ENCODE measurements at regions of chr18 and their contacts with region 1.

Region 1: GRCh38 chr18:32362485-32362884 is 108.2 kb downstream of the GAREM1 start:
- DNase-seq: no peak
- ATAC-seq: no peak
- H3K4me3 ChIP-seq: no peak overlapping the region
- H3K4me3 Mint-ChIP-seq: no peak overlapping the region
- H3K27ac ChIP-seq: no peak overlapping the region
- H3K27ac Mint-ChIP-seq: no peak overlapping the region
- H3K4me1 ChIP-seq: no peaks in the 10 kb centered on the region
- H3K4me1 Mint-ChIP-seq: no peaks in the 10 kb centered on the region
- H3K27me3 ChIP-seq: no peaks in the 10 kb centered on the region
- H3K27me3 Mint-ChIP-seq: peaks cover 11% of the 10 kb centered on the region
- CTCF ChIP-seq: no peak

Region 2: GRCh38 chr18:32300914-32301313 is 61.6 kb before region 1 on chr18:
- CTCF ChIA-PET with region 1: no interaction called
- POLR2A ChIA-PET with region 1: no interaction called
- intact Hi-C with region 1: no loop called
- DNase-seq: no peak
- ATAC-seq: no peak
- H3K4me3 ChIP-seq: no peak overlapping the region
- H3K4me3 Mint-ChIP-seq: no peak overlapping the region
- H3K27ac ChIP-seq: no peak overlapping the region
- H3K27ac Mint-ChIP-seq: no peak overlapping the region
- H3K4me1 ChIP-seq: no peaks in the 10 kb centered on the region
- H3K4me1 Mint-ChIP-seq: no peaks in the 10 kb centered on the region
- H3K27me3 ChIP-seq: no peaks in the 10 kb centered on the region
- H3K27me3 Mint-ChIP-seq: peaks cover 10% of the 10 kb centered on the region
- CTCF ChIP-seq: no peak

Region 3: GRCh38 chr18:32324181-32324580 is 38.3 kb before region 1 on chr18:
- CTCF ChIA-PET with region 1: no interaction called
- POLR2A ChIA-PET with region 1: no interaction called
- intact Hi-C with region 1: no loop called
- DNase-seq: no peak
- ATAC-seq: no peak
- H3K4me3 ChIP-seq: no peak overlapping the region
- H3K4me3 Mint-ChIP-seq: no peak overlapping the region
- H3K27ac ChIP-seq: no peak overlapping the region
- H3K27ac Mint-ChIP-seq: no peak overlapping the region
- H3K4me1 ChIP-seq: no peaks in the 10 kb centered on the region
- H3K4me1 Mint-ChIP-seq: no peaks in the 10 kb centered on the region
- H3K27me3 ChIP-seq: no peaks in the 10 kb centered on the region
- H3K27me3 Mint-ChIP-seq: peaks cover 16% of the 10 kb centered on the region
- CTCF ChIP-seq: no peak

Region 4: DNA sequence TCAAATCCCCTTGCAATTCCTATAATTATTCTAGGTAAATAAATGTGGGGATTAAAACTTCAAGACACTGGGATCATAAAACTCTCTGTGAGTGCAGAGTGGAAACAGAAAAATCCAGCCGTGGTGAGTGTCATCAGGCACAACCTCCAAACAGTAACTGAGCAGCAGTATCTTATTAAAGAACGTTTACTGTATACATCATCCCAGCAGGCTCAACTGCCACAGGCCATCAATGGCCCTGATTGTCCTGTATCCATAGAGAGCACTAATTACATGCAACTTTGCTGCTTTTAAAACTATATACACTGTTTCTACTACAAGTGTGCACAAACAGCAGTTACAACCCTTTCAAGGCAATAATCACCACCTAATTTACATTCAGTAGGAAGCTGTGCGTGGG is 84.3 kb after region 1 on chr18:
- CTCF ChIA-PET with region 1: no interaction called
- POLR2A ChIA-PET with region 1: no interaction called
- intact Hi-C with region 1: loop called in 1 of 2 experiments (anchors 5 kb)
- DNase-seq: no peak
- ATAC-seq: no peak
- H3K4me3 ChIP-seq: no peak overlapping the region
- H3K4me3 Mint-ChIP-seq: no peak overlapping the region
- H3K27ac ChIP-seq: no peak overlapping the region
- H3K27ac Mint-ChIP-seq: no peak overlapping the region
- H3K4me1 ChIP-seq: no peaks in the 10 kb centered on the region
- H3K4me1 Mint-ChIP-seq: no peaks in the 10 kb centered on the region
- H3K27me3 ChIP-seq: no peaks in the 10 kb centered on the region
- H3K27me3 Mint-ChIP-seq: peaks cover 21% of the 10 kb centered on the region
- CTCF ChIP-seq: no peak

Measured in CD8-positive, alpha-beta T cell (primary cell).